Motor neuron (in vitro differentiated cells): ENCODE measurements at regions of chr3 and their contacts with region 1.

Region 1: GRCh38 chr3:138915503-138916498 is 31.1 kb downstream of the FOXL2 start:
- ATAC-seq: peak; percentile 89 to 97 (median 94)
- H3K4me3 ChIP-seq: peak overlapping the region; percentile 42 to 65 (median 45)
- H3K27ac ChIP-seq: peak overlapping the region in 1 of 2 donors; percentile 43
- H3K4me1 ChIP-seq: no peaks in the 10 kb centered on the region

Region 2: GRCh38 chr3:138219255-138219654 is 696.5 kb before region 1 on chr3:
- in situ Hi-C with region 1: no loop called
- ATAC-seq: no peak
- H3K4me3 ChIP-seq: no peak overlapping the region
- H3K27ac ChIP-seq: no peak overlapping the region
- H3K4me1 ChIP-seq: no peaks in the 10 kb centered on the region

Region 3: DNA sequence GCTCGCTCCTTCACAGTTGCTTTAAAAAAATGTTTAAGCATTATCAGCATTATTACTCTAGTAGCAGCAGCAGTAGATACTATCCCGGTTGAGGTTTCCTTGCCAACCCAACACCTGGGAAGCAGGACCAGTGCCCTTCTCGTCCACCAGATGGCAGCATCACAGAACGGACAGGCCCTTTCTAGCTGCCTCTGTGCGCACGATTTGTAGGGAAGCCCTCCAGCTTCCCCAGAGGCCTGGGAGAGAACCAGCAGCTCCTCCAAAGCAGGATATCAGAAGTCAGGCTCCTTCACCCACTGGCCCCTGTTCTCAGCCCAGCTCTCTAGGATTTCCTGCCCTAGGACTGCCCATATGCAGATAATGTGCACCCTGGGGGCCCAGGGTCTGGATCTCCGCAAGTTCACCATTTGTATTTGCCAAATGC is 498.2 kb before region 1 on chr3:
- in situ Hi-C with region 1: loop called in 1 of 9 experiments (anchors 25 kb)
- ATAC-seq: peak; percentile 61 to 99 (median 97)
- H3K4me3 ChIP-seq: no peak overlapping the region
- H3K27ac ChIP-seq: no peak overlapping the region
- H3K4me1 ChIP-seq: no peaks in the 10 kb centered on the region

Region 4: DNA sequence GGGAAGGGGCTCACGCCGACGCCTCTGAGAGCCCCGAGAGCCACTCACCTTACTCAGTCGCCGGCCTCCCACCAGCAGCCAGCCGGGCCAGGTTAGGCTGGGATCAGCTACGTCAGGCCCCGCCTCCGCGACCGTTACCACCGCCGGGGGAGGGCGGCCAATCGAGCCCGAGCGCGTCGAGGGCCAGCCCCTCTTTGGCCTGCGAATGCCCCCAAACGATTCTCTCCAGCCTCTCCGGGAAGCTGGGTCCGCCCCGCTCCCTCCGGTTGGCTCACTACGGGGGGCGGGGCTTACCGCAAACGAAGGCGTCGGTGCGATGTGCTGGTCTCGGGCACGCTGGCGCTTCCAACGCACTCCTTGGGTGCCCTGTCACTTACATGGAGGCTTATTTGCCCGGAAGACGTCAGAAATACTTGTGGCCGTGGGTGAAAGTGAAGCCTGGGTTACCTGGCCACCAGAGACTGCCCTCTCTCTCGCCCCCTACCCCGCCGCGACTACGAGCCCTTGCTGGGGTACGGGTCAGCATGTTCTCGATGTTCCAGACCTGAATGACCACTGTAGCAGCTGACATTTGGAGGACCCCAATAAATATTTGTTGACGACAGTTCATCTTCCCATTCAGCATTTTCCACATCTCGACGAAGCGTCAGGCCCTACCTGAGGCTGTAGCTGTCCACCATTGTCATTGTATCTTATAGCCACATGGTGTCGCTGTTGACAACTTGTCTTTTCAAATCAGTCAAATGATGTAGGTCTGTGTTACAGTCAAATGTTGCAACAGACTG is 321.5 kb before region 1 on chr3 and contains the start of gene CEP70:
- in situ Hi-C with region 1: loop called in 6 of 9 experiments (anchors 10 to 25 kb)
- ATAC-seq: peak; percentile 90 to 97 (median 94)
- H3K4me3 ChIP-seq: peak within 1 kb of the TSS; percentile 66 to 87 (median 78)
- H3K27ac ChIP-seq: peak within 1 kb of the TSS; percentile 92 to 95
- H3K4me1 ChIP-seq: peaks cover 16 to 20% of the 10 kb centered on the region in 2 donors
- total RNA-seq, gene CEP70: 12.2 to 53.3 (median 34.3) TPM

Region 5: DNA sequence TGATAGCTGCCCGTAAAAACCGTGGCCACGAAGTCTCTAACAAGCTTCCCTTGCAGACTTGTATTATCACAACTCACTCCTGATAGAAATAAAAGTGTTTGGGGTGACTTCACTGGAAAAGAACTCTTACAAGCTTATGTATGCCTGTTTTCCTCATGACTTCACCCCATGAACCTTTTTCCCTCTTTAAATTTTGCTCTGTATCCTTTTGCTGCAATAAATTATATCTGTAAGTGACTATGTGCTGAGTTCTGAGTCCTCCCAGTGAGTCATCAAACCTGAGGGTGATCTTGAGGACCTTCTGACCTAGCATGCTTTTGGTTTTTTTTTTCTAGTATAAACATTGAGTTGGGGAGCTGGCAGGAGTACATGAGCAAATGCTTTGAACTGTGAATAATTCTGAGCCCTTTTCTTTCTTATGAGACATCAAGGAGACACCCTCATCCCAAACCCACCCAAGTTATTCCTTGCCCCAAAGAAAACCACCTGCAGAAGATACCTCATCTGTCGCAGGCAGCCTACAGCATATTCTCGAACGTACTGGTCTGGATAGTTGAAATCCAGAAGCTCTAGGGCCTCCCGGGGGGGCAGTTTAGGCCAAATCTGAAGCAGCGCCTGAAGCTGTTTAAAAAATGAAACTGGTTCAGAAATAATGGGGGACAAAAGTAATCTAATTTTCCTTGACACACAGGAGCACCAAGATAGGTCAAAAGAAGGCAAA is 221.4 kb before region 1 on chr3:
- in situ Hi-C with region 1: loop called in 3 of 9 experiments (anchors 5 to 10 kb)
- ATAC-seq: peak in 7 of 8 experiments; percentile 58 to 98 (median 66)
- H3K4me3 ChIP-seq: no peak overlapping the region
- H3K27ac ChIP-seq: no peak overlapping the region
- H3K4me1 ChIP-seq: no peaks in the 10 kb centered on the region